ENCODE measurements at regions of chr7 and their contacts with region 1.

Region 1: GRCh38 chr7:41256186-41256945 is 446.5 kb downstream of the INHBA start:
- DNase-seq: no peak
- ATAC-seq: no peak
- H3K4me3 ChIP-seq: no peak overlapping the region
- H3K27ac ChIP-seq: no peak overlapping the region
- H3K4me1 ChIP-seq: no peaks in the 10 kb centered on the region
- H3K27me3 ChIP-seq: no peaks in the 10 kb centered on the region
- CTCF ChIP-seq: no peak
- EP300 ChIP-seq: no peak
- POLR2A ChIP-seq: no peak
- RAD21 ChIP-seq: no peak

Region 2: DNA sequence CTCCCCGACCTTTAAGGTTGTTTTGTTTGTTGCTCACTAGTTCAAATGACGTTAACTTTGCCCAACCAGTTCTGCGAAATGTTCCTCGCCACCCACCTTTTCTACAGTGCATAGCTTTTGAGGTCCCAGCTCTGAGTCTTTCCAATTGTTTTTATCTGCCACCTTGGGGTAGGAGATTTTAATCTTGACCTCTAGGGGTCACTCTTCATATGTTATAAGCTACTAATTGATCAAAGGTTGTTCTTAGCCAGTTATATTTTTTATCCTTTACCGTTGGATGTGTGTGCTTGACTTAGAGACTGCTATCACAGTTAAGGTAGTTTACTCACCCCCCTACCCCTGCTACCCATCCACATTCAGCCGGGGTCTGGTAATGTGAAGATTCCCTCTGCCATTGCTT is 749.2 kb before region 1 on chr7:
- CTCF ChIA-PET with region 1: no interaction called
- POLR2A ChIA-PET with region 1: no interaction called
- in situ Hi-C with region 1: loop called (anchors 10 kb)
- intact Hi-C with region 1: no loop called
- DNase-seq: peak in 3 of 4 experiments; percentile 6 to 9 (median 6)
- ATAC-seq: no peak
- H3K4me3 ChIP-seq: no peak overlapping the region
- H3K27ac ChIP-seq: no peak overlapping the region
- H3K4me1 ChIP-seq: no peaks in the 10 kb centered on the region
- H3K27me3 ChIP-seq: no peaks in the 10 kb centered on the region
- CTCF ChIP-seq: peak in 1 of 3 experiments; percentile 23; a peak in 1 of 6 replicates
- EP300 ChIP-seq: no peak
- POLR2A ChIP-seq: no peak
- RAD21 ChIP-seq: peak; percentile 26 to 36; a peak in 2 of 4 replicates

Region 3: GRCh38 chr7:41268878-41269277 is 12.5 kb after region 1 on chr7:
- CTCF ChIA-PET with region 1: no interaction called
- POLR2A ChIA-PET with region 1: no interaction called
- in situ Hi-C with region 1: no loop called
- intact Hi-C with region 1: no loop called
- DNase-seq: no peak
- ATAC-seq: no peak
- H3K4me3 ChIP-seq: no peak overlapping the region
- H3K27ac ChIP-seq: no peak overlapping the region
- H3K4me1 ChIP-seq: no peaks in the 10 kb centered on the region
- H3K27me3 ChIP-seq: no peaks in the 10 kb centered on the region
- CTCF ChIP-seq: no peak
- EP300 ChIP-seq: no peak
- POLR2A ChIP-seq: no peak
- RAD21 ChIP-seq: no peak

Region 4: DNA sequence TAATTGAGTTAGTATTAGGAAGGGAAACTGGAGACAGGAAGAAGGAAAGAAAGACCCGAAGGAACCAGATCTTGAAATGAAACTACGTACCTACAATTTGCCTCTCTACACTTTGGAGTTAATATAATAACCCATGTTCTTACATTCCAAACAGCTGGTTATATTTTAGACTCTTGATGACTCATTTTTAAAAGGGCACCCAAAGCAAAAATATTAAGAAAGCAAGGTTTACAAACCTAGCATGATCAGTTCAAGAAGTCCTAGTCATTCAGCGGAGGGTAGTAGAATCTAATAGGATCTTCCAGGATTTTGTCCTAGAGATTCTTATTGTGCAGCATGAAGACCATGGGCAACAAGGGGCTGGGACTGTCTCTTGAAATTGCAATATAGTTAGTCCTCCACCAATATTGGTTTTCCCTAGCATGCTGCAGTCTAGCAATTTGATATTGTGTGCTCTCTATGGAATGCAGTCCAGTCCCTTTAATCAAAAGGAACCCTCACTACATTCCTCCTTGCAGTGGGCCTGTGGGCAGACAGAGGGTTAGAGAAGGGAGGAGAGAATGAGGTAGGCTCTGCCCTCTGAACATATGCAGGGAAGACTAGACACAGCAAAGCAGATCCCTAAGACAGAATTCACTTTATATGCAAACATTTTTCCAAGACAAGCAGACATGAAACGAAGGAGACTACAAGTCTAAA is 216.2 kb after region 1 on chr7:
- CTCF ChIA-PET with region 1: no interaction called
- POLR2A ChIA-PET with region 1: no interaction called
- in situ Hi-C with region 1: no loop called
- intact Hi-C with region 1: no loop called
- DNase-seq: no peak
- ATAC-seq: no peak
- H3K4me3 ChIP-seq: no peak overlapping the region
- H3K27ac ChIP-seq: no peak overlapping the region
- H3K4me1 ChIP-seq: no peaks in the 10 kb centered on the region
- H3K27me3 ChIP-seq: no peaks in the 10 kb centered on the region
- CTCF ChIP-seq: no peak
- EP300 ChIP-seq: no peak
- POLR2A ChIP-seq: no peak
- RAD21 ChIP-seq: no peak

Region 5: DNA sequence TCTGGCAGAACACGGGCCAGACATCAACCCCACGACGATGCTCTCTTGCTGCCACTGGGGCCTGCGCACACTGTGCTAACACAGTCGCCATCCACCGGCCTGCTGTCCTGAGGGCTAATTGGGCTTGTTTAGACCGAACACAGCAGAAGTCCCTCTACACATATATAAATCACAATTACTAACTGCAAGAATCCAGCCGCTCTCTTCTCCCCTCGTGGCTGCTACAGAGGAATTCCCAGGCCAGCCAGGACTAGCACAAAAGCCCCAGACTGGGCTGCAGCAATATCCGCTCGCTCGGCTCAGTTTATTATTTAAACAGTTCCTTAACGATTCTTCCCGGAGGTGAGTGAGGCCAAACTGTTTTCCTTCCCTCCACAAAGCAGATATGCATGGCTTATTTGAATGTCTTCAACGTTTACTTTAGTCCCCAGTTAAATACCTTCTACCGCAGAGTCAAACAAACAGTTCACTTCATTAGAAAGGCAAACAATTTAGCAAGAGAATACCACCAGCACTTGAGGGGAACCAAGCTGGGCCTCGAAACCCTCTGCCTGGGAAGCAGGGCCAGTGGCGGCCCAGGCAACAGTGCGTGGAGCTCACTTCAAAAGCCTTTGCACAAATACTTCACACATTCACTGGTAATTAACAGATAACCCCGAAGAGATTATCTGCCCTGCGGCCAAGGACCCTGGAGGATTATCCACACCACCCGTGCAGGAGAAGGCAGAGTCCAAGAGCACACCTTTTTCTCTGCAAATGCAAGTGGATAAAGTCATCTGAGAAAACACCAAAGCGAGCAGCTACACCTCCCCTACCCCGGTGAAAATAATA is 835.3 kb after region 1 on chr7:
- CTCF ChIA-PET with region 1: no interaction called
- POLR2A ChIA-PET with region 1: no interaction called
- in situ Hi-C with region 1: no loop called
- intact Hi-C with region 1: no loop called
- DNase-seq: no peak
- ATAC-seq: no peak
- H3K4me3 ChIP-seq: no peak overlapping the region
- H3K27ac ChIP-seq: no peak overlapping the region
- H3K4me1 ChIP-seq: no peaks in the 10 kb centered on the region
- H3K27me3 ChIP-seq: peaks cover 0 to 14% of the 10 kb centered on the region in 2 experiments; a peak in 3 of 5 replicates
- CTCF ChIP-seq: no peak
- EP300 ChIP-seq: no peak
- POLR2A ChIP-seq: no peak
- RAD21 ChIP-seq: no peak

Measured in K562 (cell line).